ENCODE measurements at regions of chr2 and their contacts with region 1.

Region 1: DNA sequence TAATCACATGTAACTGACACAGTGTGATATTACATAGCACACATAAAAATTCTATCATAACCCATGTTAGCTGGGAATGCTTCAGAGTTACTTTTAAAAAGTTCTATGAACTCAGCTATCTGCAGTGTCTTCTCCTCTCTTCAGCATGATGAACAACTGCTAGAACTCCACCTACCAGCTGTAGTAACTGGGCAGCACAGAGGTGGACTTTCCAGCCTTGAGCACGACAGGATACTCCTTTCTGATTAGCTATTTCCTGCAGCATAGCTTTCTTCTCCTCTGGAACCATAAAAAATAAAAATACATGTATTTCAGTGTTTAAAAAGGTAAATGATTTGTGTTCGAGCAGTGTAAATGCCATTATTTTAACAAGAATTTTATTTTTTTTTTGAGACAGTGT is 59.5 kb upstream of the AMMECR1L start:
- DNase-seq: no peak
- H3K4me3 ChIP-seq: no peak overlapping the region
- H3K27ac ChIP-seq: no peak overlapping the region
- H3K4me1 ChIP-seq: no peaks in the 10 kb centered on the region
- H3K27me3 ChIP-seq: no peaks in the 10 kb centered on the region
- CTCF ChIP-seq: no peak
- EP300 ChIP-seq: no peak
- POLR2A ChIP-seq: no peak

Region 2: GRCh38 chr2:126739141-126739540 is 1206.1 kb before region 1 on chr2:
- intact Hi-C with region 1: no loop called
- DNase-seq: no peak
- H3K4me3 ChIP-seq: no peak overlapping the region
- H3K27ac ChIP-seq: no peak overlapping the region
- H3K4me1 ChIP-seq: no peaks in the 10 kb centered on the region
- H3K27me3 ChIP-seq: no peaks in the 10 kb centered on the region
- CTCF ChIP-seq: no peak
- EP300 ChIP-seq: no peak
- POLR2A ChIP-seq: no peak

Region 3: GRCh38 chr2:127834951-127835350 is 110.3 kb before region 1 on chr2:
- intact Hi-C with region 1: loop called in 1 of 4 experiments (anchors 5 kb)
- DNase-seq: no peak
- H3K4me3 ChIP-seq: no peak overlapping the region
- H3K27ac ChIP-seq: no peak overlapping the region
- H3K4me1 ChIP-seq: no peaks in the 10 kb centered on the region
- H3K27me3 ChIP-seq: no peaks in the 10 kb centered on the region
- CTCF ChIP-seq: no peak
- EP300 ChIP-seq: no peak
- POLR2A ChIP-seq: no peak

Region 4: GRCh38 chr2:128016620-128017019 is 71.3 kb after region 1 on chr2:
- intact Hi-C with region 1: no loop called
- DNase-seq: no peak
- H3K4me3 ChIP-seq: no peak overlapping the region
- H3K27ac ChIP-seq: no peak overlapping the region
- H3K4me1 ChIP-seq: no peaks in the 10 kb centered on the region
- H3K27me3 ChIP-seq: no peaks in the 10 kb centered on the region
- CTCF ChIP-seq: no peak
- EP300 ChIP-seq: no peak
- POLR2A ChIP-seq: no peak